H1 (cell line): ENCODE measurements at regions of chr4 and their contacts with region 1.

Region 1: DNA sequence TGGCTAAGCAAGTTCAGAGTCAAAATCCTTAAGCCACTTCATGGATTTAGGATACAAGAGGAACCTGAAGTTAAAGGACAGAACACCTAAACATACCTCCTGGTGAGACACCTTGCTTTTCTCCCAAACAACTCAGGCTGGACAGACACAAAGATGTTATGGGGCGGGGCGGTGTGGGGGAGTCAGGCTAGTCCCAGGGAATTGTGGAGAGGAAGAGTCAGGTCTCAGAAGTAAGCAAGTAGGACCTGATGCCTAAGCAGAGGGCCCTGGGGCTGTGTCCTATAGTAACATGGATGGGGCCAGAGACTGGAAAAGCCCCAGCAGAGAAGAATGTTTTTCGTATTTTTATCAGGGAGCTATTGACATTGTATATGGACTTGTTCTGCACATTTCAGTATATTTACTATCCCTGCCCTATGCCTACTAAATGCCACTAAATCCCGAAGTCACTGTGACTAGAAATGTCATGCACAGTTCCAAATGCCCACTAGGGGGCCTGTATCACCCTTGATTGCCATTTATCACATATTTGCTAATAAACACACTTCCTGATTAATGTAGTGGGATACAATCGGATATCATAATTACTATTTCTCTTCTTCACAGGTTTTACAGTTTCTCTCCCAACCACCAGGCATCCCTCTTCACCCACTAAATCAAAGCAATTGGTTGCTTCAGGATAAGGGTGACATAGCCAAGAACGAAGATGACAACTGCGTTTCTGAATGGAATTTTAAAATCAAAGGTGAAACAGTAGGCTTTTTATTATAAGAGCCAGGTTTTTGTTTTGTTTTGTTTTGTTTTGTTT is 23.8 kb upstream of the ARHGAP10 start:
- DNase-seq: peak in 1 of 2 experiments; percentile 53
- H3K4me3 ChIP-seq: no peak overlapping the region
- H3K27ac ChIP-seq: no peak overlapping the region
- H3K4me1 ChIP-seq: no peaks in the 10 kb centered on the region
- H3K27me3 ChIP-seq: no peaks in the 10 kb centered on the region
- CTCF ChIP-seq: peak in 2 of 3 experiments; percentile 63 to 81; a peak in 3 of 4 replicates
- EP300 ChIP-seq: no peak
- POLR2A ChIP-seq: no peak
- RAD21 ChIP-seq: peak; percentile 59 to 73

Region 2: GRCh38 chr4:147678796-147679549 is 29.1 kb before region 1 on chr4:
- CTCF ChIA-PET with region 1: interaction called, 16 read pairs
- POLR2A ChIA-PET with region 1: no interaction called
- DNase-seq: peak in 1 of 2 experiments; percentile 75
- H3K4me3 ChIP-seq: no peak overlapping the region
- H3K27ac ChIP-seq: no peak overlapping the region
- H3K4me1 ChIP-seq: peaks cover 0 to 2% (median 0%) of the 10 kb centered on the region in 4 experiments; a peak in 2 of 7 replicates
- H3K27me3 ChIP-seq: no peaks in the 10 kb centered on the region
- CTCF ChIP-seq: peak; percentile 67 to 83 (median 76)
- EP300 ChIP-seq: no peak
- POLR2A ChIP-seq: no peak
- RAD21 ChIP-seq: peak; percentile 53 to 67

Region 3: DNA sequence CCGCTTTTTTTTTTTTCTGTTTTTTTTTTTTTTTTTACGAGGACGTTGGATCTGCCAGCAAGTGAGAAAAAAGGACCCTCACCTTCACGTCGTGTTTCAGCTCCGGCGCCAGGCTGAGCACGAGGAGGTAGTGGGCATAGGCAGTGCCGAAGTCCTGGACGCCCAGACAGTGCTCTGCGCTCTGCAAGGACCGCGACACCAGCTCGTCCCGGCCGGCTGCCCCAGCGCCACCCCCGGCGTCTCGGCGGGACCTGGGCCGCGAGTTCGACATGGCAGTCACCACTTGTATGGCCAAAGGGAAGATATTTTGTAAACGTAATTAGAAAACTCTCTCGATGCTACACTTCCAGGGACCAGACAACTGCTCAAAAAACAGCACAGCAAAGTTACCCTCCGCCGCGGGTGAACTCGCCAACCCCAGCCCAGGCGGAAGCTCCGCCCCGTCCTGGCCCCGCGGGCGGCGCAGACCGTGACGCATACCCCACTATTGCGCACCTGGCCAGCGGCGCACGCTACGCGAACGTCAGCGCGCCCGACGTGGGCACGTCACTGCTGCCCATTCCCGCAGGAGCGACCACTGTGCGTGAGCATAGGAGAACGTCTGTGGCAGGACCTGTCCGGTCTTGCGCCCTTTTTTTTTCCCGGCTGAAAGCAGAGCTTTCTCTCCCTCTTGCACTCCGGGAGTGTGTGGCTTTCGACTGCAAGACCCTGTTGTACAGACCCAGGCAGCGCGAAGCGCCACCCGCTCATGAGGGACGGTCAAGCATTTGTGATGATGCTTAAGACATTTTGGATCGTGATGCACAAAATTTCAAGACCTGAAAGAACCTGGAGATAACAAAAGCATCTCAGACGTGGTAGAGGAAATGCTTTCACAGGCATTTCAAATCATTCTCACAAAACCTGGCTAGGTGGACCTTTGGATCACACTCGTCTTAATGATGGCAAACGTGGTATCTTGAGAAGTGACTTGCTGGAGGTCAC is 24.1 kb before region 1 on chr4 and contains the start of gene PRMT9:
- CTCF ChIA-PET with region 1: interaction called, 16 read pairs
- POLR2A ChIA-PET with region 1: no interaction called
- DNase-seq: peak; percentile 49 to 93
- H3K4me3 ChIP-seq: peak within 1 kb of the TSS; percentile 68 to 83 (median 77)
- H3K27ac ChIP-seq: peak within 1 kb of the TSS; percentile 30; the same call in 1 of the 2 replicates
- H3K4me1 ChIP-seq: peaks cover 0 to 6% (median 3%) of the 10 kb centered on the region in 4 experiments; a peak in 4 of 7 replicates
- H3K27me3 ChIP-seq: no peaks in the 10 kb centered on the region
- CTCF ChIP-seq: no peak
- EP300 ChIP-seq: peak in 1 of 2 experiments; percentile 51; a peak in 1 of 3 replicates
- POLR2A ChIP-seq: peak; percentile 71 to 92
- RAD21 ChIP-seq: no peak
- total RNA-seq, gene PRMT9: 9.6 and 9.9 TPM in 2 replicates

Region 4: DNA sequence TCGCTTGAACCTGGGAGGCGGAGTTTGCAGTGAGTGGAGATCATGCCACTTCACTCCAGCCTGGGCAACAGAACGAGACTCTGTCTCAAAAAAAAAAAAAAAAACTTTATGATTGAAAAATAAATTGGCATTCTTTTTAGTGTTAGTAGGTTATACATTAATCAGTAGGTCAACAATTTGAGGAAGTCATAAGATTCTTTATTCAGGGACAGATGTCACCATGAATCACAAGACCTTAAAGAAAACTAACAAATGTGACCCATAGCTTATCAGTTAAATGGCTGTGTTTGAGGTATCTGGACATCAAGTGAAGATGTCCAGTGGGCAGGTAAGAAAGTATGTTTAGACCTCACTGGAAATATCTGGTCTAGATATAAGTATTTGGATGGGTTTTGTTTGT is 14.9 kb before region 1 on chr4:
- CTCF ChIA-PET with region 1: interaction called, 14 read pairs
- POLR2A ChIA-PET with region 1: no interaction called
- DNase-seq: no peak
- H3K4me3 ChIP-seq: no peak overlapping the region
- H3K27ac ChIP-seq: no peak overlapping the region
- H3K4me1 ChIP-seq: no peaks in the 10 kb centered on the region
- H3K27me3 ChIP-seq: no peaks in the 10 kb centered on the region
- CTCF ChIP-seq: no peak
- EP300 ChIP-seq: no peak
- POLR2A ChIP-seq: no peak
- RAD21 ChIP-seq: no peak

Region 5: DNA sequence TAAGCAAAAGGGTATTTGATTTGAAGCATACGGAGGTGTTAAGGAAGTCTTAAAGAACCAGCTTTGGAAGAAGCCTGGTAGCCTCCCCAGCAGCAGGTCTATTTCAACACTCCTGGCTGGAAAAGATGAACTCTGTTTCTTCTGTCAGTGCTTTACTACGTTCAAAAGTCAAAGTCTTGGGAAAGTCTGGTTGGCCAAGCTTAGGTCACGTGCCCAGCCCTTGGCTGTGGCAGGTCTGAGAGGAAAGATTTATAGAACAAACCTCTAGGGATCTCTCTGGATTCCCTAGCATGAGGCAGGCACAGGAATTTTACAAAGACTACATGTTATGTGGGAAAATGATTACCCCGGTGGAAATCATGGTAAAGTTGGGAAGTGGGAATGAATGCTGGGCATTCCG is 15.3 kb after region 1 on chr4:
- CTCF ChIA-PET with region 1: interaction called, 24 read pairs
- POLR2A ChIA-PET with region 1: no interaction called
- DNase-seq: peak in 1 of 2 experiments; percentile 32
- H3K4me3 ChIP-seq: no peak overlapping the region
- H3K27ac ChIP-seq: no peak overlapping the region
- H3K4me1 ChIP-seq: no peaks in the 10 kb centered on the region; a peak in 2 of 7 replicates
- H3K27me3 ChIP-seq: 0 out of 7 replicates have a peak, but pooled peaks cover 0 to 4% (median 0%) of the 10 kb centered on the region in 4 experiments
- CTCF ChIP-seq: no peak
- EP300 ChIP-seq: no peak
- POLR2A ChIP-seq: no peak
- RAD21 ChIP-seq: no peak

Region 6: GRCh38 chr4:147843162-147843561 is 135.1 kb after region 1 on chr4:
- CTCF ChIA-PET with region 1: interaction called, 20 read pairs
- POLR2A ChIA-PET with region 1: no interaction called
- DNase-seq: no peak
- H3K4me3 ChIP-seq: no peak overlapping the region
- H3K27ac ChIP-seq: no peak overlapping the region
- H3K4me1 ChIP-seq: peaks cover 0 to 10% (median 4%) of the 10 kb centered on the region in 4 experiments; a peak in 4 of 7 replicates
- H3K27me3 ChIP-seq: no peaks in the 10 kb centered on the region
- CTCF ChIP-seq: peak; percentile 28 to 64 (median 46); a peak in 3 of 4 replicates
- EP300 ChIP-seq: no peak
- POLR2A ChIP-seq: no peak
- RAD21 ChIP-seq: peak; percentile 31 to 34; a peak in 3 of 4 replicates

Region 7: GRCh38 chr4:147984065-147984777 is 276.2 kb after region 1 on chr4:
- CTCF ChIA-PET with region 1: no interaction called
- POLR2A ChIA-PET with region 1: no interaction called
- DNase-seq: peak; percentile 47 to 67
- H3K4me3 ChIP-seq: no peak overlapping the region
- H3K27ac ChIP-seq: no peak overlapping the region
- H3K4me1 ChIP-seq: peaks cover 0 to 16% (median 12%) of the 10 kb centered on the region in 4 experiments; a peak in 5 of 7 replicates
- H3K27me3 ChIP-seq: no peaks in the 10 kb centered on the region
- CTCF ChIP-seq: peak; percentile 47 to 85 (median 85)
- EP300 ChIP-seq: no peak
- POLR2A ChIP-seq: no peak
- RAD21 ChIP-seq: peak; percentile 89 to 90